WTC11 (cell line): ENCODE measurements at regions of chr1 and their contacts with region 1.

Region 1: GRCh38 chr1:47179017-47179987 is 10.5 kb downstream of the PDZK1IP1 start:
- DNase-seq: peak; percentile 94
- ATAC-seq: peak; percentile 81
- H3K4me3 Mint-ChIP-seq: peak overlapping the region; percentile 79
- H3K27ac Mint-ChIP-seq: peak overlapping the region; percentile 76
- H3K4me1 Mint-ChIP-seq: peaks cover 22% of the 10 kb centered on the region
- H3K27me3 Mint-ChIP-seq: peaks cover 36% of the 10 kb centered on the region
- CTCF ChIP-seq: peak; percentile 62

Region 2: DNA sequence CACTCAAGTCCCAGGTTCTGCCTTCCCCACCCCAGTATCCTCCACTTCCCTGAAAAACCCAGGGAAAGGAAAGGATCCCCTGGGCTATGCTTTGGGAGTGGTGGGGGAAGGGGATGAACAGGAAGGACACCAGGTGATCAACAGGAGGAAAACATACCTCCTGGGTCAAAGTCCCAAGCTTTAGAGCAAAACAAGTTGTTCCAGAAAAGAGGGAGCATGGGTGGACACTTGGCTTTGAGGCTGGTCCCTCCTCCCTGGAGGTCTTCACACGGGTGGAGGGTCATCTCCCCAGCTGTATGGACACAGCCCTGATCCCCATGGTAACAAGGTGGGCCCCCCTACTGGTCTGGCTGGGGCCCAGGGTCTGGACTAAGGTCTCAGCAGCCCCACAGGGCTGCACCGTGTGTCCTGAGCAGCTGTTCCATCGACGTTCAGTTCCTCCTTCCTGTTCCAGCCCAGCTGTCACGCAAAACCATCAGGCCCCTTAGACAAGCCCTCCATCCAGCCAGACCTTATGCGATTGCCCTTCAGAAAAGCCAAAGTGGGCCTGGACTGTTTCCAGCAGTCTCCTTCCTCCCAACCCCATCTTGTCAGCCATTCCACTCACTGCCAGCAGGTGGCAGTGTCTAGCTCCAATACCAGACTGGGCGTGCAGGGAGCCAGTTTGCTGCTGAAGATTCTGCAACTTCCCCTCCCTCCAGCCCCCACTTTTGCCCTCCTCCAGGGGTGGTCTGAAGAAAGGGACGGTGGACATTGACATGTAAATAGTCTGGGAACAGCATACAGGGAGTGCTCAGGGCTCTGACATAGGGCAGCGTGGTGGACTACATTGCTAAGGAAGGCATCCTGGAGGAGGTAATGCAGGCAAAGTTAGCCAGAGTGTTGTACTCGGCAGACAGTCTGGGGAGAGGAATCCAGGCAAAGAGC is 13.4 kb after region 1 on chr1:
- CTCF ChIA-PET with region 1: interaction called, 152 read pairs
- POLR2A ChIA-PET with region 1: interaction called, 6 read pairs
- DNase-seq: peak; percentile 94
- ATAC-seq: peak; percentile 86
- H3K4me3 Mint-ChIP-seq: peak overlapping the region; percentile 25; the same call in 1 of the 2 replicates
- H3K27ac Mint-ChIP-seq: no peak overlapping the region
- H3K4me1 Mint-ChIP-seq: peaks cover 37% of the 10 kb centered on the region
- H3K27me3 Mint-ChIP-seq: peaks cover 37% of the 10 kb centered on the region
- CTCF ChIP-seq: peak; percentile 91

Region 3: DNA sequence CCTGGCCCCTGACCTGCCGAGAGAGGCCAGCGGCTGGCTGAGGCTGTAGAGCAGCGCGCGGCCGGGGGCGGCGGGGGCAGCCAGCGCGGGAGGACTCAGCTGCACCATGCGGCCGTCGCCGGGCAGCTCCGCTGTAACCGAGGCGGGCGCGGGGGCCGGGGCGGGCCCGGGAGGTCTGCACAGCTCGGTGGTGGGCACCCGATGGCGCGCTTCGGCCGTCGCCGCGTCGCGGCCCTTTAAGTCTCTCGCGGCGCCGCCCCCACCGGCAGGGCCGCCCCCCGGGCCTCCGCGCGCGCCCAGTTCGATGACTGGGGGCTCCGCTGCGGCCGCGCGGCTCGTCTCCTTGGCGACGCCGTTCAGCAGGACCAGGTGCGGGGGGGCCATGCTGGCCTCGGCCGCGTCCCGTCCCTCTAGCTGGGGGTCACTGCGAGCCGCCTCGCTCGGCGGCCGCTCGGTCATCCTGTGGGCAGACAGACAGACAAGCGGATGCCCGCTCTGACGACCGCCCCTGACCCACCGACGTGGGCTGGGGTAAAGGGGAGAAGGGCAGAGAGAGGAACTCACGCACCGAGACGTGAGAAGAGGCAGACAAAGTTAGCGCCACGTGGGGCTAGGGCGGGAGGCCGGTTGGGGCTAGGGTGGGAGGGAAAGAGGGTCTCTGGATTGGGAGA is 46.3 kb after region 1 on chr1:
- CTCF ChIA-PET with region 1: interaction called, 18 read pairs
- POLR2A ChIA-PET with region 1: no interaction called
- DNase-seq: no peak
- ATAC-seq: peak; percentile 6
- H3K4me3 Mint-ChIP-seq: peak overlapping the region; percentile 63
- H3K27ac Mint-ChIP-seq: no peak overlapping the region
- H3K4me1 Mint-ChIP-seq: peaks cover 43% of the 10 kb centered on the region
- H3K27me3 Mint-ChIP-seq: peaks cover 51% of the 10 kb centered on the region
- CTCF ChIP-seq: no peak

Region 4: GRCh38 chr1:47241114-47242113 is 62.1 kb after region 1 on chr1:
- CTCF ChIA-PET with region 1: interaction called, 20 read pairs
- POLR2A ChIA-PET with region 1: no interaction called
- DNase-seq: no peak
- ATAC-seq: no peak
- H3K4me3 Mint-ChIP-seq: no peak overlapping the region
- H3K27ac Mint-ChIP-seq: no peak overlapping the region
- H3K4me1 Mint-ChIP-seq: peaks cover 12% of the 10 kb centered on the region
- H3K27me3 Mint-ChIP-seq: peaks cover 70% of the 10 kb centered on the region
- CTCF ChIP-seq: no peak

Region 5: DNA sequence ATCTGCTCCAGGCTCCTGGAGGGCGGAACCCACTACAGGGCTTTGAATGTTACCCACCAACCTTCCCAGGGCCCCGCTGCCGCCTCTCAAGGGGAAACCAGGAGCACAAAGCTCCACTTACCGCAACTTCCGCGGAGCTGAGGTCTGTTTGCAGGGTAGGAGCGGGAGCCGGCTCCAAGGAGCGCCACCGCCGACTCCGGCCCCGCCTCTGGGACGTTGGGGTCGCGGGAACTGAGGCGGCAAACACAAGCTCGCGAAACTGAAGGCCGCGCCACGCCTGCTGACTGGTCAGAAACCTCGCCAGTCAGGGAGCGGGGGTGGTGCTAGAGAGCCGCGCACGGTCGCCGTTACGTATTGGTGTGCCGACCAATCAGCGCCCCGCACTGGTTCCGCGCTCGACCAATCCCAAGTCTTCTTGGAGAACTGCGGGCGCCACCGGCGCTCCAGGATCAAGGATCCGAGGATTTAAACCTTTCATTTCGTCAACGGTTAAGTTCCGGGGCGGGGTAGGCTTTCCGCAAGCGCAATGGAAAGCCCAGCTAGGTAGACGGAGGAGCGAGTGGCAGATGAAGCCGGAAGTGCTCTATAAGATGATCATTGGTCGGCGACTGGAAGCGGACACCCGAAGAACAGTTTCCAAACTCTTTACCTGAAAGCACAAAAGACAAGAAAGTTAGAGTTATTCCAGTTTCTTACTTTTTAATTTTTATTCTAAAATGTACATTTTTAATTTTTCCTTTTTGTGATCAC is 134.8 kb after region 1 on chr1 and contains the start of gene STIL:
- CTCF ChIA-PET with region 1: interaction called, 15 read pairs
- POLR2A ChIA-PET with region 1: interaction called, 7 read pairs
- DNase-seq: peak; percentile 99
- ATAC-seq: peak; percentile 97
- H3K4me3 Mint-ChIP-seq: peak within 1 kb of the TSS; percentile 99
- H3K27ac Mint-ChIP-seq: peak within 1 kb of the TSS; percentile 99
- H3K4me1 Mint-ChIP-seq: peaks cover 18% of the 10 kb centered on the region
- H3K27me3 Mint-ChIP-seq: peaks cover 3% of the 10 kb centered on the region; the same call in 1 of the 2 replicates
- CTCF ChIP-seq: no peak
- total RNA-seq, gene STIL: 24.0 to 29.7 TPM (median 24.1 TPM) in 3 replicates

Region 6: GRCh38 chr1:47424336-47424982 is 245.2 kb after region 1 on chr1:
- CTCF ChIA-PET with region 1: interaction called, 14 read pairs
- POLR2A ChIA-PET with region 1: no interaction called
- DNase-seq: peak; percentile 75
- ATAC-seq: peak; percentile 97
- H3K4me3 Mint-ChIP-seq: no peak overlapping the region
- H3K27ac Mint-ChIP-seq: no peak overlapping the region
- H3K4me1 Mint-ChIP-seq: peaks cover 11% of the 10 kb centered on the region
- H3K27me3 Mint-ChIP-seq: peaks cover 93% of the 10 kb centered on the region
- CTCF ChIP-seq: peak; percentile 65